ENCODE measurements at regions of chr6 and their contacts with region 1.

Region 1: GRCh38 chr6:44064089-44064947 is 62.9 kb downstream of the MRPL14 start:
- DNase-seq: peak; percentile 67 to 84 (median 67)
- ATAC-seq: peak; percentile 27 to 87
- H3K4me3 ChIP-seq: no peak overlapping the region
- H3K27ac ChIP-seq: peak overlapping the region; percentile 59
- H3K4me1 ChIP-seq: peaks cover 16% of the 10 kb centered on the region
- H3K27me3 ChIP-seq: no peaks in the 10 kb centered on the region

Region 2: DNA sequence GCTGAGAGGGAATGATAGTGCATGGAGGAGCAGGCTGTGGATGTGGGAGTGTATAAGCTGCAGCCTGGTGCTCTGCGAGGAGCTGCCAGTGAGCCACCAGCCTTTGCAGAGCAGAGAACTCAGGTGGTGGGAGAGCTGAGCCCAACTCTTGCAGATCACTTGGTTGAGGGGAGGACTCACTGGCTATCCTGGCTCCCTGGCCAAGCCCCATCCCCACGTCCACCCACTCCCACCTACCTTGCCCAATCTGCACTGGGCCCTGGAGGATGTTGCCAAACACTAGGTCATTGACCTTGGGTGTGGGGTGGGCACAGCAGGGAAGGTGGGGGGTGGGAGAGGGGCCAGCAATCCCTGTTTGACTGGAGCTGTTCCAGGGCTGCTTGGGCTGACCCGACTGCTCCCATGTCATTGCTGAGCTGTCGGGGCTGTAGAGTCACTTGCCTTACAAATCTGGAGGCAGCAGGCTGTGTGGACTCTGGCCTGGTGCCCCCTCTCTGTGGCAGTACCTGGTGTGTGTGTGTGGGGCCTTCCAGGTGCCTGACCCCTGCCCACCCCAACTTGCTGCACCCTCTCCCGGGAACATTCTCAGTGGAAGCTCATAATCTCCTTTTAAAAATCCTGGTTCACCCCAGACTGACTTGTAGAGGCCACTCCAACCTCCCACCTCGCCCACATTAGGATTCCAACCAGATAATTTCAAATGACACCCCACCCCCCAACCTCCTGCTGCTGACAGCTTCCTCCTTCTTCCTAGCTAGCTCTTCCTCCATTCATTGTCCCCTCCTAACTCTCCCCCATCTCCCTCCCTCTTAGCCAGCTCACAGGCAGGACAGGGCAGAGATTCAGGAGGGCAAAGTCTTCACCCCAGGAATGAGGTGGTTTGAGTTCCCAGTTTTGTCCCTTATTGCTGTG is 99.4 kb before region 1 on chr6:
- intact Hi-C with region 1: no loop called
- DNase-seq: no peak
- ATAC-seq: peak; percentile 25 to 58
- H3K4me3 ChIP-seq: no peak overlapping the region
- H3K27ac ChIP-seq: no peak overlapping the region
- H3K4me1 ChIP-seq: no peaks in the 10 kb centered on the region
- H3K27me3 ChIP-seq: no peaks in the 10 kb centered on the region

Region 3: GRCh38 chr6:44002593-44003344 is 61.5 kb before region 1 on chr6:
- intact Hi-C with region 1: loop called in 1 of 4 experiments (anchors 5 kb)
- DNase-seq: peak; percentile 53 to 85 (median 76)
- ATAC-seq: peak; percentile 15 to 47
- H3K4me3 ChIP-seq: peak overlapping the region; percentile 21
- H3K27ac ChIP-seq: peak overlapping the region; percentile 91
- H3K4me1 ChIP-seq: no peaks in the 10 kb centered on the region
- H3K27me3 ChIP-seq: no peaks in the 10 kb centered on the region